SK-N-SH (cell line): ENCODE measurements at regions of chr11 and their contacts with region 1.

Region 1: DNA sequence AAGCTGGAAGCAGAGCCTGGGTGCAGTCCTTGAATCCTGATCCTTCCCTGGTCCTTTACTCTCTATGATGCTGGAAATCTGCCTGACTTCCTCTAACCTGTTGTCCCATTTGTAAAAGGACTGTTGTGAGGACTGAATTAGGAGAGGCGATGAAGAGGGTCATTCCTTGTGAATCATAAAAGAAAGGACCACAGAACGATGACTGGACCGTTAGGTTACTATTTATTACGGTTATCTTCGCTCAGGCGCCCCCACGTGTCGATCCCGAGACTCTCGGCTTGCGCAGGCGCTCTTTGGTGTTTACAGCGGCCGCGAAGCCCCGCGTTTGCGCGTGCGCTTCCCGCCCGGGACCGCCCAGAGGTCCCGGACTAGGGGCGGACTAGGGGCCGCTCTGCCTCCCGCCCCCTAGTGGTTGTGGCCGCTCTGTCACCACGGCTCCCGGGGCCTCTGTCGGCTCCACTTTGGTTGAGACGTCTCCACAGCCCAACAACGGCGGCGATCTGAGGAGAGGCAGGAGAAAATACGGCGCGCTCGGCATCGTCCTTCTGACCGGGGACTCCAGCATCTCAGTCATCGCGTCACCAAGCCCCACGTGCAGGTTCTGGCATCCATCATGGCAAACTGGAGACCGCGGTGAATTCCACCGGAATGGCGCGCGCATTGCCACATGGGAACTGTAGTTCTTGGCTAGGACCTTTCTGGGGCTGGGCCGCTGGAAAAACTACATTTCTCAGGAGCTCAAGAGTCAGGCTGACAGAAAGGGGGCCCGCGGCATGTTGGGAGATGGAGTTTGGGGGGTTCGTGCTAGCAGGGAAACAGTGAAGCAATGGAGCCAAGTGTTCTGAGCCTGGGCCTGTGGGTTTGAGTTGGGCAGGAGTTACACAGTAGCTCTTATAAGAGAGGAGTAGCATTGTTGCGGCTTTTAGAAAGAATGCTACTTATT is at the start of gene STARD10:
- DNase-seq: peak; percentile 99
- H3K4me3 ChIP-seq: peak within 1 kb of the TSS; percentile 75 to 89
- H3K27ac ChIP-seq: peak within 1 kb of the TSS; percentile 66 to 91
- H3K4me1 ChIP-seq: peaks cover 9 to 26% of the 10 kb centered on the region in 2 experiments; a peak in 2 of 4 replicates
- H3K27me3 ChIP-seq: no peaks in the 10 kb centered on the region
- CTCF ChIP-seq: peak; percentile 99
- EP300 ChIP-seq: no peak; a peak in 1 of 4 replicates
- RAD21 ChIP-seq: peak; percentile 78
- polyA plus RNA-seq, gene STARD10: 42.2 and 47.7 TPM in 2 replicates

Region 2: GRCh38 chr11:72743321-72744221 is 50.1 kb before region 1 on chr11:
- CTCF ChIA-PET with region 1: interaction called, 198 read pairs
- POLR2A ChIA-PET with region 1: no interaction called
- DNase-seq: no peak
- H3K4me3 ChIP-seq: no peak overlapping the region
- H3K27ac ChIP-seq: no peak overlapping the region; a peak in 1 of 4 replicates
- H3K4me1 ChIP-seq: peaks cover 0 to 69% of the 10 kb centered on the region in 2 experiments; a peak in 2 of 4 replicates
- H3K27me3 ChIP-seq: no peaks in the 10 kb centered on the region
- CTCF ChIP-seq: no peak
- EP300 ChIP-seq: no peak
- RAD21 ChIP-seq: no peak

Region 3: DNA sequence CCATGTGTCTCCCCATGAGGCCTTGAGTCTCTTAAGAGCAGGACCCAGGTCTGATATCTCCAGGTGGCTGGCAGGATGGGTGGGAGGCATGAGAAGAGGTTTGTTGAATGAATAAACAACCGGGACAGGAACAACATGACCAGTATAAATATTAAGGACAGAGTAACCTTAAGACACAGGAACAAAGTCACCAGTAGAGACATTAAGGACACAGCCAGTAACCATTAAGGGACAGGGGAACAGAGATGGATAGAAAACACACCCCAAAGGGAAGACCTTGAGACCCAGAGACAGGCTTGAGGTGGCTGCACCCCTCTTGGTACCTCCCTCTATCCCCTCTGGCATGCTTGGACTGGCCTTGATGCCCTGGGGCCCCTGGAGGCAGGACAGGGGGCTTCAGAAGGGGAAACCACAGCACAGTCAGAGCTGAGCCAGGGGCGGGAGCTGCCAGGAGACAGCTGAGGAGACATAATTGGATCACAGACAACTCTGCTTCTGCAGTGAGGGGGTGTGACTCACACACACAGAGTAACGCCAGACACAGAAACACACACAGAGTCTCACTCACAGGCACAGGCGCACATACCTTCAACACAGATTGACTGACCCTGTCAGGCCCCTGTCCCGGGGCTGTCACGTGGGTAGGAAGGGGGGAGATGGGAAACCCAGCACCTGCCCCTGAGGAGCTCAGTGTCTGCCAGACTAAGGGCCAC is 20.6 kb before region 1 on chr11:
- CTCF ChIA-PET with region 1: interaction called, 11 read pairs
- POLR2A ChIA-PET with region 1: interaction called, 3 read pairs
- DNase-seq: peak; percentile 87
- H3K4me3 ChIP-seq: no peak overlapping the region
- H3K27ac ChIP-seq: peak overlapping the region; percentile 52 to 90; a peak in 3 of 4 replicates
- H3K4me1 ChIP-seq: peaks cover 26 to 64% of the 10 kb centered on the region in 2 experiments
- H3K27me3 ChIP-seq: no peaks in the 10 kb centered on the region
- CTCF ChIP-seq: no peak
- EP300 ChIP-seq: peak in 1 of 2 experiments; percentile 81; a peak in 2 of 4 replicates
- RAD21 ChIP-seq: peak; percentile 18; the same call in 1 of the 2 replicates

Region 4: GRCh38 chr11:72781313-72782050 is 12.2 kb before region 1 on chr11:
- CTCF ChIA-PET with region 1: interaction called, 43 read pairs
- POLR2A ChIA-PET with region 1: interaction called, 4 read pairs
- DNase-seq: peak; percentile 92
- H3K4me3 ChIP-seq: peak overlapping the region; percentile 46 to 54
- H3K27ac ChIP-seq: no peak overlapping the region
- H3K4me1 ChIP-seq: peaks cover 3 to 52% of the 10 kb centered on the region in 2 experiments; a peak in 2 of 4 replicates
- H3K27me3 ChIP-seq: no peaks in the 10 kb centered on the region
- CTCF ChIP-seq: no peak
- EP300 ChIP-seq: no peak
- RAD21 ChIP-seq: no peak

Region 5: GRCh38 chr11:72814286-72815109 is 20.8 kb after region 1 on chr11 and contains the start of gene ATG16L2:
- CTCF ChIA-PET with region 1: interaction called, 15 read pairs
- POLR2A ChIA-PET with region 1: interaction called, 5 read pairs
- DNase-seq: peak; percentile 98
- H3K4me3 ChIP-seq: peak within 1 kb of the TSS; percentile 83 to 92
- H3K27ac ChIP-seq: peak within 1 kb of the TSS; percentile 91 to 96
- H3K4me1 ChIP-seq: peaks cover 8 to 33% of the 10 kb centered on the region in 2 experiments; a peak in 2 of 4 replicates
- H3K27me3 ChIP-seq: no peaks in the 10 kb centered on the region
- CTCF ChIP-seq: peak; percentile 18
- EP300 ChIP-seq: no peak; a peak in 1 of 4 replicates
- RAD21 ChIP-seq: no peak
- polyA plus RNA-seq, gene ATG16L2: 26.9 and 29.4 TPM in 2 replicates